Dendritic cell treated with granulocyte-macrophage colony-stimulating factor and Interleukin-4, amounts not matched to agents 40 ng/mL and 50 ng/mL, for 4 days (primary cell): ENCODE measurements at regions of chr2 and their contacts with region 1.

Region 1: GRCh38 chr2:68959001-68959400 is 6.3 kb upstream of the GKN2 start:
- H3K4me3 Mint-ChIP-seq: no peak overlapping the region
- H3K27ac Mint-ChIP-seq: no peak overlapping the region
- H3K4me1 Mint-ChIP-seq: no peaks in the 10 kb centered on the region
- H3K27me3 Mint-ChIP-seq: no peaks in the 10 kb centered on the region

Region 2: DNA sequence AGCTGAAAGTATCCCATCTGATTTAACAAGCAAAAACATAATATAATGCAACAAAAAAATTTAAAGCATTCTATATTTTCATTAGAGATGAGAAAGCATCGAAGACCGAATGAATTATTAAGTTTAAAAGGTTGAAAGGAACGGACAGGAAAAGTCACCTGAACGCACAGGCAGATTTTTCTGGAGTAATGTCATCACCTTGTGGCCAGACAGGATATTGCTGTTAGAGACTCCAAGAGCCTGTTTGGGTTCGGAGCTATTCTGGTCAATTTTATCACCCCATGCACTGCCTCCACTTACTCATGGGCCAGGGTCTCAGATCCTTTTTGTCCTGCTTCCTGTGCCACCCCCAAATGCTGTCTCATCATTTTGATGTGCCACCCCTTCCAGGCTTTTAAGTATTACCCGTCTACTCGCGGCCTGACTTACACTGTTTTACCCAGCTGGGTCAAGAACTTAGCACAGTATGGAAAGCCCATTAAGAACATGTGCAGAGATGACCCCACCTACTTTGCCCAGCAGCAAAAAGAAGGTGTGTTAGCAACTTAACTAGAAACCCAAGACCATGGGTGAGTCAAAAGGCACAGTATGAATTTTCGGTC is 33.6 kb before region 1 on chr2:
- intact Hi-C with region 1: no loop called
- H3K4me3 Mint-ChIP-seq: no peak overlapping the region
- H3K27ac Mint-ChIP-seq: no peak overlapping the region
- H3K4me1 Mint-ChIP-seq: peaks cover 3% of the 10 kb centered on the region
- H3K27me3 Mint-ChIP-seq: peaks cover 8% of the 10 kb centered on the region

Region 3: DNA sequence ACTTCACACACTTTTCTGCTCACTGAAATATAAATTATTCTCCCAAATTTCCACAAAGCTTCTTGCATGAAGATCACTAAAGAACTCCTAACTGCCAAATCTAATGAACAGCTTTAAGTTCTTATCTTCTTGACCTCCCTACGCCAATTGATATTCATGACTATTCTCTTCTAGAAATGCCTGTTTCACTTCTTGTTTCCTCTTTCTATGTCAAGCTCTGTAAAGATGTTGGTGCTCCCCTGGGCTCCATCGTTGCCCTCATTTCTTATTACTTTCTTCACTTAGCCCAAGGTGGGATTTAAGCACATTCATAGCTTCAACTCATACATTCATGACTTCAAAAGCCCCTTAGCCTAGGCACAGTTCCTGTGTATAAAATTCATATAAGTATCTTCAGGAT is 44.7 kb after region 1 on chr2:
- intact Hi-C with region 1: loop called (anchors 5 kb)
- H3K4me3 Mint-ChIP-seq: no peak overlapping the region
- H3K27ac Mint-ChIP-seq: no peak overlapping the region
- H3K4me1 Mint-ChIP-seq: peaks cover 6% of the 10 kb centered on the region
- H3K27me3 Mint-ChIP-seq: peaks cover 8% of the 10 kb centered on the region